ENCODE measurements at regions of chr3 and their contacts with region 1.

Region 1: DNA sequence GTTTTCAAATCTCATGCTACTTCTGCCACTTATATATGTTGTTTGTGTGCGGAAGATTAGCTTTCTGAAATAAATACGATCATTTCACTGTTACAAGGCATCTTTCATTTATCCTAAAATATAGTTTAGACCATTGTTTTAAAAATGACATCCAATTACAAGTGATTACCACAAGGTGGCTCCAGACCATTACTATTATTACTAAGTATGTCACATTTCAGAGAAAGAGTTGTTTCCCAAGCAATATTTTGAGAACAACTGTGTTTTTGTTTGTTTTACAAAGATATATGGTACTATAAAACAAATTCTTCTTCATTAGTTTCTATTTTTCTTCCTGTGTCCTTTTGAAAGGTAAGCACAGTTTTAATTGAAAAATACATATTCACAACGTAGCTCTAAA is 136.0 kb upstream of the RAP2B start:
- DNase-seq: peak; percentile 52
- ATAC-seq: no peak
- H3K4me3 ChIP-seq: no peak overlapping the region
- H3K27ac ChIP-seq: no peak overlapping the region
- H3K4me1 ChIP-seq: 0 out of 2 replicates have a peak, but pooled peaks cover 1% of the 10 kb centered on the region
- H3K27me3 ChIP-seq: peaks cover 6% of the 10 kb centered on the region
- CTCF ChIP-seq: peak; percentile 79
- POLR2A ChIP-seq: no peak
- RAD21 ChIP-seq: peak; percentile 83

Region 2: DNA sequence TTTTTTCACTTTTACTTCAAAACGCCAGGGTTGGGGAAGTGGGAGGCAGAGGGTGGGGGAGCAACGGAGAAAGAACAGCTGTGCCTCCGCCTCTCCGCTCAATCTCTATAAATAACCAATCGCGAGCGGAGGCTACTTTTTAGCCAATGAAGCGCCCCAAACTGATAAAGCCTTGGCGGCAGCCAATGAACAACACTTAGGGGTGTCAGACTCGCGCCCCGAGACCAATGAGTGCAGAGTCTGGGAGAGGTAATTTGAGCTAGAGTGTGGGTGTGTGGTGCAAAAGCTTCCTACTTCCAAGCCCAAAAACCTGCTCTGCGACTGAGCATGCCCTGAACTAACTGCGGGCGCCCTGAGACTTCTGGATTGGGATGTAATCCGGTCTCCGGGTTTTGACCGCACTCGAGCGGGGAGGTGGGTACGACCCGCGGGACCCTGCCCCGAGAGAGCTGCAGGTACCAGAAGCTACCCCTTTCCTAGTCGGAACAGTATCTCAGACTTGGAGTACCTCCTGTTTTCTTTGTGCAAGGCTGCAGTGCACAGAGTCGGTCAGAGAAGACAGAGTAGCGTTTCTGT is 135.2 kb after region 1 on chr3:
- CTCF ChIA-PET with region 1: interaction called, 5 read pairs
- POLR2A ChIA-PET with region 1: no interaction called
- dilution Hi-C with region 1: no loop called
- in situ Hi-C with region 1: no loop called
- intact Hi-C with region 1: loop called (anchors 1 kb)
- DNase-seq: peak; percentile 100
- ATAC-seq: peak; percentile 78
- H3K4me3 ChIP-seq: peak overlapping the region; percentile 73
- H3K27ac ChIP-seq: peak overlapping the region; percentile 98
- H3K4me1 ChIP-seq: peaks cover 4% of the 10 kb centered on the region; the same call in 1 of the 2 replicates
- H3K27me3 ChIP-seq: no peaks in the 10 kb centered on the region
- CTCF ChIP-seq: no peak
- POLR2A ChIP-seq: no peak
- RAD21 ChIP-seq: 0 out of 2 replicates have a peak, but pooled peaks have one; percentile 12

Region 3: GRCh38 chr3:153631102-153631501 is 605.1 kb after region 1 on chr3:
- CTCF ChIA-PET with region 1: interaction called, 10 read pairs
- POLR2A ChIA-PET with region 1: no interaction called
- dilution Hi-C with region 1: no loop called
- in situ Hi-C with region 1: no loop called
- intact Hi-C with region 1: no loop called
- DNase-seq: no peak
- ATAC-seq: no peak
- H3K4me3 ChIP-seq: no peak overlapping the region
- H3K27ac ChIP-seq: no peak overlapping the region
- H3K4me1 ChIP-seq: no peaks in the 10 kb centered on the region
- H3K27me3 ChIP-seq: peaks cover 4% of the 10 kb centered on the region; the same call in 1 of the 2 replicates
- CTCF ChIP-seq: no peak
- POLR2A ChIP-seq: no peak
- RAD21 ChIP-seq: no peak

Region 4: GRCh38 chr3:153927107-153927506 is 901.1 kb after region 1 on chr3:
- CTCF ChIA-PET with region 1: no interaction called
- POLR2A ChIA-PET with region 1: interaction called, 7 read pairs
- dilution Hi-C with region 1: no loop called
- in situ Hi-C with region 1: no loop called
- intact Hi-C with region 1: loop called (anchors 1 kb)
- DNase-seq: peak; percentile 60
- ATAC-seq: peak; percentile 77
- H3K4me3 ChIP-seq: no peak overlapping the region
- H3K27ac ChIP-seq: no peak overlapping the region
- H3K4me1 ChIP-seq: no peaks in the 10 kb centered on the region
- H3K27me3 ChIP-seq: no peaks in the 10 kb centered on the region
- CTCF ChIP-seq: peak; percentile 31
- POLR2A ChIP-seq: no peak
- RAD21 ChIP-seq: no peak

Region 5: GRCh38 chr3:154018100-154018696 is 992.2 kb after region 1 on chr3:
- CTCF ChIA-PET with region 1: no interaction called
- POLR2A ChIA-PET with region 1: no interaction called
- dilution Hi-C with region 1: no loop called
- in situ Hi-C with region 1: no loop called
- intact Hi-C with region 1: loop called (anchors 2 kb)
- DNase-seq: peak; percentile 18
- ATAC-seq: no peak
- H3K4me3 ChIP-seq: no peak overlapping the region
- H3K27ac ChIP-seq: no peak overlapping the region
- H3K4me1 ChIP-seq: no peaks in the 10 kb centered on the region
- H3K27me3 ChIP-seq: no peaks in the 10 kb centered on the region
- CTCF ChIP-seq: peak; percentile 41
- POLR2A ChIP-seq: no peak
- RAD21 ChIP-seq: peak; percentile 42

Region 6: GRCh38 chr3:154252759-154253638 is 1227.0 kb after region 1 on chr3:
- CTCF ChIA-PET with region 1: no interaction called
- POLR2A ChIA-PET with region 1: no interaction called
- dilution Hi-C with region 1: no loop called
- in situ Hi-C with region 1: loop called (anchors 25 kb)
- intact Hi-C with region 1: loop called (anchors 1 kb)
- DNase-seq: peak; percentile 84
- ATAC-seq: peak; percentile 99
- H3K4me3 ChIP-seq: no peak overlapping the region
- H3K27ac ChIP-seq: no peak overlapping the region
- H3K4me1 ChIP-seq: no peaks in the 10 kb centered on the region
- H3K27me3 ChIP-seq: no peaks in the 10 kb centered on the region
- CTCF ChIP-seq: peak; percentile 99
- POLR2A ChIP-seq: peak; percentile 49; the same call in 1 of the 2 replicates
- RAD21 ChIP-seq: peak; percentile 97

Measured in IMR-90 (cell line).